MCF 10A (cell line): ENCODE measurements at regions of chr10 and their contacts with region 1.

Region 1: DNA sequence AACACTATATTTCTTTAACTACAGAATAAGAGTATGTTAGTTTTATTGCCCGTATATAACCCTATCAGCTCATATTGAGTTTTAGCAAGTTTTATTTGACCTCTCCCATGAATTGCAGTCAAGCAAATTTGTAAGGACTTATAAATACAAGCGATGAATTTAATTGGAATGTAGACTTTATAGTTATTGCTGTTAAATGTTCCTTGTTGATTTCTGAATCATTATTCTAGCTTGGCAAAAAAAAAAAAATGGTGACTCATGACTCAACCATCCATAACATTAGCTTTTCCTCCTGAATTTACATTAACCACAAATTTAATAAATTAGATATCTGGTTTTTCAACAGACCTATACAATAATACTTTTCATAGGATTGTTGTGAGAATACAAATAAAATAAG is 334.0 kb upstream of the LRRTM3 start:
- DNase-seq: no peak
- H3K4me3 Mint-ChIP-seq: no peak overlapping the region
- H3K27ac Mint-ChIP-seq: no peak overlapping the region
- H3K4me1 Mint-ChIP-seq: peaks cover 5% of the 10 kb centered on the region
- H3K27me3 Mint-ChIP-seq: no peaks in the 10 kb centered on the region
- CTCF ChIP-seq: no peak

Region 2: DNA sequence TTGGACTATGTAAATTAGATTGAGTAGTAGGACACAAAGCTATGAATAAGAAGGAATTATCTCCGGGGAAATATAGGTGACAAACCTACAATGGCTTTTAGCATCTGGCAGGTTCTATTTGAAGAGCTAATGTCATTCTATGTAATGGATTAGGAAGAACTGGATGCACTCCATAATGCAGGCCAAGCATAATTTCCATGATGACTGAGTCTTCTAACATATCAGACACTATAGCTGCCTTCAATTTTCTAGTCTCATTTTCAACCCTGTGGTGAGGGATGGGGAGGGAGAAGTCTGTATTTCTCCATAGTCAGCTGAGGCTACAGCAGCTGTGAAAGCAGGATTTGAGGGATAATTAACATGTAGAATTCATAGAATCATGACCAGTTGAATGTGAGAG is 56.4 kb before region 1 on chr10:
- CTCF ChIA-PET with region 1: no interaction called
- POLR2A ChIA-PET with region 1: no interaction called
- intact Hi-C with region 1: loop called (anchors 2 kb)
- DNase-seq: no peak
- H3K4me3 Mint-ChIP-seq: no peak overlapping the region
- H3K27ac Mint-ChIP-seq: no peak overlapping the region
- H3K4me1 Mint-ChIP-seq: no peaks in the 10 kb centered on the region
- H3K27me3 Mint-ChIP-seq: no peaks in the 10 kb centered on the region
- CTCF ChIP-seq: no peak